Common myeloid progenitor, CD34-positive (primary cell): ENCODE measurements at regions of chr7 and their contacts with region 1.

Region 1: DNA sequence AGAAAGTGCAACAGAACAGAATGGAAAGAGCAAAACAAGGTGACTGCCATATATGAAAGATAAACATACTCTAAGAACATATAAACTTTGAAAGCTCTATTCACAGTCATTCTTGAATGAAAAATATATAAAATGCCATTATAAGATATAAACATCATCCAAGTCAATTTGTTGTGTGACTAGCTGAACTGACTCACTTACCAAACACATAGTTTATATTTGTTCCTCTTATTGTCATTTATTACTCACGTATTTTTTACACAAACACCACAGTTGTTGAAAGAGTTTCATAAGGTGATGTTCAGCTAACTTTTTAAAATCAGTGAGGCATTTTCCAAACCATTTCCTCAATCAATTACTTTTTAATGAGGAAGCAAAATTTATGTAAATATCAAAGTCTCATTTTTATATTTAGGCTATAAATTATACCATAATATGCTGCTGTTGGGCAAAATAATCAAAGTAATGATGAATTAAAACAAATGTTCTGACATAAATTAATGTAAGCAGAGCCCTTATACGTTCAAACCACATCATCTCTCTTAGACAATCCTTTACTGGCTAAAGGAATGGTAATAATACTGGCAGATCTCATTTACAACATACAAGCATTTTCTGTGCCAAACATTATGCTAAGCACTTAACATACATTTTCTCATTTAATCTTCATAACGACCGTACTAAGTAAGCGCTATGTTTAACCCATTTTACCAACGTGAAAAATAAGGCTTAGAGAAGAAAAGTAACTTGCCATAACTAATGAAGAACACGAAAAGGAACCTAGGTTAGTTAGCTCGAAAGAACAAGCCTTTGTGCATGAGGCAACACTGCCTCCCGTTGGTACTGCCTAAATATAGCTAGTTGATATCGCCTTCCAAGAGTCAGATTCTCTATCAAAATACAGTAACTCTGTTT is 7.3 kb downstream of the LRRN3 start:
- DNase-seq: peak; percentile 49 to 79 (median 72)
- H3K4me3 ChIP-seq: peak overlapping the region in 1 of 7 experiments; percentile 19
- H3K27ac ChIP-seq: no peak overlapping the region
- H3K4me1 ChIP-seq: no peaks in the 10 kb centered on the region
- H3K27me3 ChIP-seq: no peaks in the 10 kb centered on the region

Region 2: DNA sequence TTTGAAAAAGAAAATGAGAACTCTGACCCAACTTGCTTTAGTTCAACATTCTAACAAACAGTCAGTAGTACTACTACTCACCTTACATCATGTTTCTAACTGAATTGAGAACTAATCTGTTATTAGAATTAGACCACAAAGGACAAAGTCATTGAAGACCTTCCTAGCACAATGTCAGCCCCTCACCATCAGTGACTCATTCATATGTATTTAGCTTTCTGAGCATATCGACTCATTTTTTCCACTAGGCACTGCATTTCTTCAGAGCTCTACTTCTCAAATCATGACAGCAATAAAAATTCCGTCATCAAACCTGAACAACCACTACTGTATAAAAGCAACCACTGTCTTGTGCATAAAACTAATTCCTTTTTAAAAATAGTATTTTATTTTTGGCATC is 11.7 kb before region 1 on chr7:
- CTCF ChIA-PET with region 1: interaction called, 12 read pairs
- POLR2A ChIA-PET with region 1: no interaction called
- DNase-seq: peak in 2 of 3 donors; percentile 52 to 60
- H3K4me3 ChIP-seq: no peak overlapping the region
- H3K27ac ChIP-seq: no peak overlapping the region
- H3K4me1 ChIP-seq: peaks cover 5 to 32% (median 15%) of the 10 kb centered on the region in 4 experiments
- H3K27me3 ChIP-seq: no peaks in the 10 kb centered on the region